ENCODE measurements at regions of chr3 and their contacts with region 1.

Region 1: GRCh38 chr3:150408221-150409102 is at the start of gene TSC22D2:
- DNase-seq: peak; percentile 96
- H3K4me3 Mint-ChIP-seq: peak within 1 kb of the TSS; percentile 96
- H3K27ac Mint-ChIP-seq: peak within 1 kb of the TSS; percentile 97
- H3K4me1 Mint-ChIP-seq: peaks cover 21% of the 10 kb centered on the region
- H3K27me3 Mint-ChIP-seq: no peaks in the 10 kb centered on the region
- total RNA-seq, gene TSC22D2: 12.3 to 13.7 TPM

Region 2: DNA sequence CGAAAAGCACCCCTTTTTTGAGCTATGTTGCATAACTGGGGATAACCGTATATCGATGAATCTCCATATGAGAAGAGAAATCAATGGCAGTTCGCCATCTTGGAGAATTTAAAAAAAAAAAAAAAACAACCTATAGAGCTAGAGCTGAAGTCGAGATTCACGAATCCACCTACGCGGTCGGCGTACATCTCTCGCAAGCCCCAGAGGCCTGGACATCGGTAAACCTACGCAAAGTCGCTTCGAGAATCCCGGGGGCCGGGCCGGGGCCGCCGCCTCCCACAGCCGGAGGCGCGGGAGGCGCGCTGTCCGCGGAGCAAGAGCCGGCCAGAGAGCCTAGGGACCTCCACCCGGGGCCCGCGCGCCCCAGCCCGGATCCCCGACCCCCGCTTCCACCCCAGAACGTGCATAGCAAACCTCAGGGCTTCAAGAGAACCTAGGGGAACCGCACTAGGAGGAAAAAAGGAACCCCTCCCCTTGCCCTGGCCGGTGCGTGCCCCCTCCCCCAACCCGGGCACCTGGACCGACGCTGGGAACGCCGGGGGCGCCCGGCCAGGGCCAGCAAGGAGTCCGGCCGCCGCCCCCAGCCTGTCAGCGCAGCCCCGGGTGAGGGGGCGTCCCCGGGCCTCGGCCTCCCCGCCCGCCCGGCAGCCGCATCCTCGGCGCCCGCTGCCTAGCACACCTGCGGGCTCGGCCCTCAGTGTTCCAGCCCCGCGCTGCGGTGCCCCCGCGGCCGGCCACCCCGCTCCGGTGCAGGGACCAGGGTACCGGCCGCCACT is 438.3 kb before region 1 on chr3:
- CTCF ChIA-PET with region 1: interaction called, 3 read pairs
- POLR2A ChIA-PET with region 1: no interaction called
- intact Hi-C with region 1: loop called (anchors 10 kb)
- DNase-seq: peak; percentile 83
- H3K4me3 Mint-ChIP-seq: peak overlapping the region; percentile 77
- H3K27ac Mint-ChIP-seq: no peak overlapping the region
- H3K4me1 Mint-ChIP-seq: peaks cover 11% of the 10 kb centered on the region
- H3K27me3 Mint-ChIP-seq: peaks cover 21% of the 10 kb centered on the region

Region 3: GRCh38 chr3:150384296-150385212 is 23.9 kb before region 1 on chr3:
- CTCF ChIA-PET with region 1: interaction called, 10 read pairs
- POLR2A ChIA-PET with region 1: interaction called, 10 read pairs
- intact Hi-C with region 1: loop called (anchors 1 kb)
- DNase-seq: peak; percentile 72
- H3K4me3 Mint-ChIP-seq: peak overlapping the region; percentile 46
- H3K27ac Mint-ChIP-seq: peak overlapping the region; percentile 64
- H3K4me1 Mint-ChIP-seq: peaks cover 24% of the 10 kb centered on the region
- H3K27me3 Mint-ChIP-seq: no peaks in the 10 kb centered on the region

Region 4: DNA sequence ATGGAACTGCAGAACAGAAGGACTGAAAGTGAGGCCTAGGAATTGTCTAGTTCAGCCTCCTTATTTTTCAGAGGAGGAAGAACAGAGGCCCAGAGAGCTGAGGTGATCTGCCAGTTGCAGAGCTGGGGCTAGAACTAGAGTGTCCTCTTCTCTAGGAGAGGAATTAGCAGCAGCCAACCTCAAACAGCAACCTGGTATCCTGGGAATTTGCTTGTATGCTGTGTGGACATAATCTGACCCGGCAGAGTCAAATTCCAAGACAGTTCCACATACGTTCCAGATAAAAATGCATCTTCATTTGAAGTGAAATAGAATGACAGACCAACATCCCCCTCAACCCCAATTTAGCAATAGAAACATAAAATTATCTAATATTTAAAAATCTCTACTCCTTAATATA is 13.9 kb before region 1 on chr3:
- CTCF ChIA-PET with region 1: no interaction called
- POLR2A ChIA-PET with region 1: no interaction called
- intact Hi-C with region 1: no loop called
- DNase-seq: no peak
- H3K4me3 Mint-ChIP-seq: no peak overlapping the region
- H3K27ac Mint-ChIP-seq: no peak overlapping the region
- H3K4me1 Mint-ChIP-seq: no peaks in the 10 kb centered on the region
- H3K27me3 Mint-ChIP-seq: peaks cover 2% of the 10 kb centered on the region

Region 5: GRCh38 chr3:150447609-150448465 is 39.4 kb after region 1 on chr3:
- CTCF ChIA-PET with region 1: no interaction called
- POLR2A ChIA-PET with region 1: no interaction called
- intact Hi-C with region 1: loop called (anchors 2 kb)
- DNase-seq: no peak
- H3K4me3 Mint-ChIP-seq: no peak overlapping the region
- H3K27ac Mint-ChIP-seq: no peak overlapping the region
- H3K4me1 Mint-ChIP-seq: peaks cover 36% of the 10 kb centered on the region
- H3K27me3 Mint-ChIP-seq: no peaks in the 10 kb centered on the region

Region 6: DNA sequence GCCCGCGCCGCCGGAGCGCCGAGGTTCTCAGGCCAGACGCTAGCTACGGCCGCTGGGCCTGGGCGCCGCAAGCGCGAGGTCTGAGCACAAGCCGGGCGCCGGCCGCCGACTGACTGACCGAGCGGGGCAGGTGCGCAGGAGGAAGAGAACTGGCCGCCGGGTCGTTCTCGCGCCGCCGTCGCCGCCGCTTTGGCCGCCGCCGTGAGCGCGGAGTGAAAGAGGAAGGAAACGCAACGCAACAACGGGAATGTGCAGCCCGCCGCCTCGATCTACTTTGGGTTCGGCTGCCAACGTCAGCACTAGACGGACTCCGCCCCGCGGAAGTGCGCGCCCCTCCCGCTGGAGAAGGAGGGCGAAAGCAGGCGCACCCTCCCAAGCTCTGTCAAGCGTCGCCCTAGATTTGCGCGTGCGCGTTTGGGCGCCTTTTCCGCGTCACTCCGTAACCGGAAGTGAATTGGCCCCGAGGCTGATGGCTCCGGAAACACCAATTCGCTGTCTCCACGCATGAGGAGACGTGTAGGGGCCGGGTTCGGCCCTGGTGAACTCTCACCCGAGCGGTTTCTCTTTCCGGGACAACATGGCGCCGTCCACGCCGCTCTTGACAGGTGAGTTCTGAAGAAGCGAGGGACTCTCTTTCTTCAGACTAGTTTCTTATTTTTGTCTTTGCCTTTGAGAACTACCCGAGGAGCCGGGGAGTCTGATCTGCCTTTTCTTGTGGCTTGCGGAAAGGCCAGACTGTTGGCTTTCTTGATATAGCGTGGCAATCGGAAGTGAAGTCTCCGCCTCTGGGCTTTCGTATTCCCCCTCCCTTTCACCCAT is 138.0 kb after region 1 on chr3 and contains the starts of genes EIF2A and SERP1:
- CTCF ChIA-PET with region 1: interaction called, 4 read pairs
- POLR2A ChIA-PET with region 1: interaction called, 25 read pairs
- intact Hi-C with region 1: loop called (anchors 1 kb)
- DNase-seq: peak; percentile 100
- H3K4me3 Mint-ChIP-seq: peak within 1 kb of the TSS; percentile 99
- H3K27ac Mint-ChIP-seq: peak within 1 kb of the TSS; percentile 96
- H3K4me1 Mint-ChIP-seq: peaks cover 58% of the 10 kb centered on the region
- H3K27me3 Mint-ChIP-seq: no peaks in the 10 kb centered on the region
- total RNA-seq, gene EIF2A: 131 to 137 TPM
- total RNA-seq, gene SERP1: 100 to 111 TPM

Region 7: GRCh38 chr3:150703299-150704134 is 295.1 kb after region 1 on chr3 and contains the start of gene ERICH6:
- CTCF ChIA-PET with region 1: no interaction called
- POLR2A ChIA-PET with region 1: no interaction called
- intact Hi-C with region 1: loop called (anchors 2 kb)
- DNase-seq: peak; percentile 92
- H3K4me3 Mint-ChIP-seq: peak within 1 kb of the TSS; percentile 89
- H3K27ac Mint-ChIP-seq: peak within 1 kb of the TSS; percentile 81
- H3K4me1 Mint-ChIP-seq: peaks cover 21% of the 10 kb centered on the region
- H3K27me3 Mint-ChIP-seq: no peaks in the 10 kb centered on the region
- total RNA-seq, gene ERICH6: not detected

Region 8: GRCh38 chr3:151203051-151203420 is 794.6 kb after region 1 on chr3 and contains the start of gene GPR171:
- CTCF ChIA-PET with region 1: no interaction called
- POLR2A ChIA-PET with region 1: no interaction called
- intact Hi-C with region 1: loop called (anchors 5 kb)
- DNase-seq: peak; percentile 84
- H3K4me3 Mint-ChIP-seq: peak within 1 kb of the TSS; percentile 86
- H3K27ac Mint-ChIP-seq: peak within 1 kb of the TSS; percentile 99
- H3K4me1 Mint-ChIP-seq: peaks cover 65% of the 10 kb centered on the region
- H3K27me3 Mint-ChIP-seq: no peaks in the 10 kb centered on the region
- total RNA-seq, gene GPR171: 70.7 to 74.0 TPM

Measured in activated CD4-positive, alpha-beta memory T cell treated with anti-CD3 and anti-CD28 coated beads for 36 hours (primary cell).